ENCODE measurements at regions of chr3 and their contacts with region 1.

Region 1: GRCh38 chr3:149384911-149385321 is 7.5 kb upstream of the TM4SF1 start:
- DNase-seq: peak in 1 of 2 experiments; percentile 66
- H3K4me3 ChIP-seq: no peak overlapping the region
- H3K27ac ChIP-seq: peak overlapping the region; percentile 100
- H3K4me1 ChIP-seq: peaks cover 71% of the 10 kb centered on the region
- H3K27me3 ChIP-seq: no peaks in the 10 kb centered on the region
- CTCF ChIP-seq: no peak

Region 2: GRCh38 chr3:149120051-149120972 is 264.6 kb before region 1 on chr3:
- CTCF ChIA-PET with region 1: no interaction called
- POLR2A ChIA-PET with region 1: no interaction called
- intact Hi-C with region 1: loop called (anchors 5 kb)
- DNase-seq: peak in 1 of 2 experiments; percentile 54
- H3K4me3 ChIP-seq: no peak overlapping the region
- H3K27ac ChIP-seq: no peak overlapping the region
- H3K4me1 ChIP-seq: no peaks in the 10 kb centered on the region
- H3K27me3 ChIP-seq: no peaks in the 10 kb centered on the region
- CTCF ChIP-seq: peak; percentile 76

Region 3: DNA sequence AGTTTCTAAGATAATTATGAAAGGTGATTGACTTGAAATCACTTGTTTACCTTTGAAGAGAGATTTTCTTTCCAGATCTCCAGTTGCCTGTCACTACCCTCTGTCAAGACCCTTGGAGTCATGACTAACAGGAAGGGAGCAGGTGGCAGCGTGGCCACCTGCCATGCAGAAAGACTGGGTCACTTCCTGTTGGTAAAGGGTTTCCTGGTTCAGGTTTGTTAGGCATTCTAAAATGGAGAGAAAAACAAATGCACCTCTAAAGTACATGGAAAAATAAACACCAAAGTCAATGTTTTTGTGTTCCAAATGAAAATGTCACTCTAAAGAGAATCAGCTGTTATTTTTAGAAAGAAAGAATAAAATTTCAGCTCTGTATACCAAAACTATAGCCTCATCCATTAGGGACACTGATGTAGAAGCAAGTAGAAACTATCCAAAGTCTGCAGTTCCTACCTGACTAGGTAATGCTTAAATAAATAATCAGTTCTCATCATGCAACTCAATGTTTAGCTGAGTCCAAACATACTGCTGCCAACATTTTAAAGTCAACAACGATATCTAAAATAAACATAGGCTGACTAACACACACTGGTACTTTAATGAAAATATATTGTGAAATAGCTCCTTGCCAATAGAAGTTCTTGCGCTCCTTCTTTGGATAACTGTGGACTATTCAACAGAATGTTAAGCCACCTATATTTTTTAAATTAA is 16.5 kb after region 1 on chr3:
- CTCF ChIA-PET with region 1: no interaction called
- POLR2A ChIA-PET with region 1: interaction called, 14 read pairs
- intact Hi-C with region 1: no loop called
- DNase-seq: peak; percentile 33 to 97
- H3K4me3 ChIP-seq: peak overlapping the region; percentile 30; the same call in 1 of the 2 replicates
- H3K27ac ChIP-seq: peak overlapping the region; percentile 94
- H3K4me1 ChIP-seq: peaks cover 45% of the 10 kb centered on the region
- H3K27me3 ChIP-seq: no peaks in the 10 kb centered on the region
- CTCF ChIP-seq: no peak

Region 4: GRCh38 chr3:149448331-149448831 is 63.5 kb after region 1 on chr3:
- CTCF ChIA-PET with region 1: no interaction called
- POLR2A ChIA-PET with region 1: no interaction called
- intact Hi-C with region 1: loop called (anchors 2 kb)
- DNase-seq: peak; percentile 22 to 81
- H3K4me3 ChIP-seq: no peak overlapping the region
- H3K27ac ChIP-seq: peak overlapping the region; percentile 81
- H3K4me1 ChIP-seq: peaks cover 36% of the 10 kb centered on the region
- H3K27me3 ChIP-seq: no peaks in the 10 kb centered on the region
- CTCF ChIP-seq: no peak